ENCODE measurements at regions of chr9 and their contacts with region 1.

Region 1: GRCh38 chr9:132575005-132575609 is 7.3 kb upstream of the BARHL1 start:
- DNase-seq: peak; percentile 74 to 85 (median 81)
- ATAC-seq: peak; percentile 97
- H3K4me3 ChIP-seq: no peak overlapping the region
- H3K27ac ChIP-seq: no peak overlapping the region
- H3K4me1 ChIP-seq: no peaks in the 10 kb centered on the region; a peak in 1 of 5 replicates
- H3K27me3 ChIP-seq: peaks cover 4 to 62% of the 10 kb centered on the region in 2 experiments; a peak in 3 of 5 replicates
- CTCF ChIP-seq: peak; percentile 85 to 86 (median 86)
- EP300 ChIP-seq: no peak
- POLR2A ChIP-seq: no peak
- RAD21 ChIP-seq: peak; percentile 75 to 90

Region 2: GRCh38 chr9:132214027-132214622 is 361.0 kb before region 1 on chr9:
- CTCF ChIA-PET with region 1: no interaction called
- POLR2A ChIA-PET with region 1: no interaction called
- in situ Hi-C with region 1: no loop called
- intact Hi-C with region 1: no loop called
- DNase-seq: peak in 2 of 4 experiments; percentile 29 to 32
- ATAC-seq: peak; percentile 52
- H3K4me3 ChIP-seq: no peak overlapping the region
- H3K27ac ChIP-seq: no peak overlapping the region
- H3K4me1 ChIP-seq: peaks cover 0 to 8% of the 10 kb centered on the region in 2 experiments; a peak in 1 of 5 replicates
- H3K27me3 ChIP-seq: peaks cover 37 to 85% of the 10 kb centered on the region in 2 experiments
- CTCF ChIP-seq: no peak
- EP300 ChIP-seq: no peak
- POLR2A ChIP-seq: no peak
- RAD21 ChIP-seq: no peak

Region 3: DNA sequence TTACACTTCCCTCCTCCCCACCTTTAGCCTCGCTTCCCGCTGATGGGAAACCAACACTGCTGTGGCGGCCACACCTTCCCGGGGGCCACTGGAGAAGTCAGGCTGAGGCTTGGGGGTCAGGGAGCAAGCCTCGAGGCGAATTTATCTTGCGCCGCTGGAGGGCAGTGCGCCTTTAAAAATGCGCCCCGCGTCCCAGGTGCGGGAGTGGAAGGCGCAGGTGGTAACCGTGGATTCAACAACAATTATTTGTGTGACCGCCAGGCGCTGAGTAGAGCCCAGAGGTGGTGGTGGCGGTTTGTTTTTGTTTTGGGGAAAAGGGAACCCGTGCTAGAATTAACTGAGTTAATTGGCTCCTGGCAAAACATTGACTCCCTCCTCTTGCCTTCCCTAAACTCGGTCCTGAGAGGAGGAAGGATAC is 164.0 kb before region 1 on chr9:
- CTCF ChIA-PET with region 1: interaction called, 24 read pairs
- POLR2A ChIA-PET with region 1: interaction called, 3 read pairs
- in situ Hi-C with region 1: loop called (anchors 5 kb)
- intact Hi-C with region 1: loop called (anchors 1 kb)
- DNase-seq: peak; percentile 71 to 77 (median 76)
- ATAC-seq: peak; percentile 87
- H3K4me3 ChIP-seq: no peak overlapping the region
- H3K27ac ChIP-seq: no peak overlapping the region
- H3K4me1 ChIP-seq: peaks cover 13 to 17% of the 10 kb centered on the region in 2 experiments; a peak in 4 of 5 replicates
- H3K27me3 ChIP-seq: peaks cover 23 to 31% of the 10 kb centered on the region in 2 experiments
- CTCF ChIP-seq: peak; percentile 85 to 93 (median 86)
- EP300 ChIP-seq: no peak
- POLR2A ChIP-seq: no peak
- RAD21 ChIP-seq: peak; percentile 75 to 86

Measured in K562 (cell line).